A549 (cell line): ENCODE measurements at regions of chr12 and their contacts with region 1.

Region 1: GRCh38 chr12:75724928-75725312 is 213.5 kb upstream of the KRR1 start:
- DNase-seq: peak; percentile 28 to 80
- ATAC-seq: peak; percentile 74 to 80
- H3K4me3 ChIP-seq: peak overlapping the region; percentile 18; the same call in 1 of the 3 replicates
- H3K27ac ChIP-seq: peak overlapping the region; percentile 84 to 86
- H3K4me1 ChIP-seq: peaks cover 56% of the 10 kb centered on the region
- CTCF ChIP-seq: no peak
- EP300 ChIP-seq: peak in 1 of 2 experiments; percentile 63; a peak in 2 of 5 replicates
- POLR2A ChIP-seq: no peak
- RAD21 ChIP-seq: peak; percentile 24 to 29; a peak in 2 of 5 replicates

Region 2: GRCh38 chr12:75784591-75784990 is 59.7 kb after region 1 on chr12:
- CTCF ChIA-PET with region 1: interaction called, 10 read pairs
- POLR2A ChIA-PET with region 1: no interaction called
- DNase-seq: peak in 1 of 2 experiments; percentile 52
- ATAC-seq: peak in 1 of 2 experiments; percentile 55; a peak in 4 of 6 replicates
- H3K4me3 ChIP-seq: no peak overlapping the region
- H3K27ac ChIP-seq: peak overlapping the region; percentile 38 to 73; a peak in 5 of 6 replicates
- H3K4me1 ChIP-seq: peaks cover 25% of the 10 kb centered on the region
- CTCF ChIP-seq: no peak
- EP300 ChIP-seq: no peak
- POLR2A ChIP-seq: no peak
- RAD21 ChIP-seq: no peak